ENCODE measurements at regions of chr21 and their contacts with region 1.

Region 1: DNA sequence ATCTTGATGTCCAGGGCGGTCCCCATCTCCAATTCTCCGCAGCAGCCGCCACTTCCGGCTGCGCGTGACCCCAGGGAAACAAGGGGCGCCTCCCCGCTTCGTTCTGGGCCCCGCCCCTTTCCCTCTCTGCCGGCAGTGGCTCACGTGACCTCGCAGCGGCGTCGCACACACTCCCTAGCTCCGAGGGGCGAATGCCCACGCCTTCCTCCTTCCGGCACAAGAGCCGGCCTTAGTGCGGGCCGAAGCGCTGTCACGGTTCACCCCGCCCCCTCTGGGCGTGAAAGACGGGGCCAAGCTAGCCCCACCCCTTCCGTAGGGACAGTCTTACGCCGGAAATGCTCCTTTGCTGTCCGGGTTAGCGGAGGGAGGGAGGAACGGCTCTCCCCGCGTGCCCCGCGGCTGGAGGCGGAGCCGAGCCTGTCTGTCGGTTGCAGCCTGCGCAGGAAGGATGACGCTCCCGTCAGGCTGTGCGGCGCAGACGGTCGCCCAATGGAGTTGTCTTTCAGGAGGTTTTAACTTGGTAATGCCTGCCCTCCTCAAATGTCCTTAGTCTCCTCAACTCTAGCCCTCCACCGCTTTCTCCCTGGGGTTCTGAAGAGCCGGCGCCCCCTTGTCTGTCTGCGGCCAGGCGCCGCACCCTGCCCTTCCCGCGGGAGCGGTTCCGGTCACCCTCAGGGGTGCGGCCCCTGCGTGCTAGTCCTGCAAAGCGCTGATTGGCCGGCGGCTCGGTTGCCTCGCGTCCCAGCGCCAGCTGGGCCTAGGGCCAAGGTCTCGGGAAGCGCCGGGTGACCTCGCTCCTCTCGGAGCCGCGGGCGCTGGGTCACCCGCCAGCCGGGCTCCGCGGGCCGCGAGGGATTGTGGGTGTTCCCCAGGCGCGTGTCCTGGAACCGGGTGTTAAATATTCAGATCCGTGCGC is at the start of gene VPS26C:
- DNase-seq: peak; percentile 98 to 99 (median 99)
- ATAC-seq: peak; percentile 95 to 98 (median 97)
- H3K4me3 ChIP-seq: peak within 1 kb of the TSS; percentile 69 to 95 (median 90)
- H3K27ac ChIP-seq: peak within 1 kb of the TSS; percentile 91 to 100 (median 96)
- H3K4me1 ChIP-seq: peaks cover 0 to 48% (median 27%) of the 10 kb centered on the region in 12 donors
- H3K27me3 ChIP-seq: no peaks in the 10 kb centered on the region
- CTCF ChIP-seq: peak in 2 of 12 donors; percentile 7 to 11
- POLR2A ChIP-seq: peak; percentile 16 to 68
- total RNA-seq, gene VPS26C: 42.1 to 88.6 (median 53.5) TPM

Region 2: GRCh38 chr21:37072988-37073416 is 194.5 kb before region 1 on chr21 and contains the starts of genes PIGP and TTC3:
- intact Hi-C with region 1: loop called in 1 of 10 experiments (anchors 2 kb)
- DNase-seq: peak; percentile 95 to 99 (median 96)
- ATAC-seq: peak; percentile 84 to 92 (median 88)
- H3K4me3 ChIP-seq: peak within 1 kb of the TSS; percentile 67 to 96 (median 80)
- H3K27ac ChIP-seq: peak within 1 kb of the TSS; percentile 92 to 100 (median 99)
- H3K4me1 ChIP-seq: peaks cover 0 to 31% (median 18%) of the 10 kb centered on the region in 12 donors
- H3K27me3 ChIP-seq: no peaks in the 10 kb centered on the region
- CTCF ChIP-seq: no peak
- POLR2A ChIP-seq: peak; percentile 42 to 94
- total RNA-seq, gene PIGP: 30.7 to 44.9 (median 37.9) TPM
- total RNA-seq, gene TTC3: 34.5 to 72.1 (median 46.8) TPM

Region 3: GRCh38 chr21:37208056-37208721 is 59.3 kb before region 1 on chr21:
- intact Hi-C with region 1: no loop called
- DNase-seq: peak; percentile 78 to 91 (median 87)
- ATAC-seq: peak; percentile 91 to 95 (median 94)
- H3K4me3 ChIP-seq: peak overlapping the region in 8 of 12 donors; percentile 1 to 37 (median 22)
- H3K27ac ChIP-seq: peak overlapping the region; percentile 68 to 96 (median 88)
- H3K4me1 ChIP-seq: peaks cover 0 to 35% (median 22%) of the 10 kb centered on the region in 12 donors
- H3K27me3 ChIP-seq: no peaks in the 10 kb centered on the region
- CTCF ChIP-seq: no peak
- POLR2A ChIP-seq: no peak

Region 4: GRCh38 chr21:37220981-37221664 is 46.4 kb before region 1 on chr21:
- intact Hi-C with region 1: loop called in 5 of 10 experiments (anchors 1 to 5 kb)
- DNase-seq: peak; percentile 95 to 97 (median 97)
- ATAC-seq: peak; percentile 96 to 98 (median 96)
- H3K4me3 ChIP-seq: peak overlapping the region; percentile 38 to 84 (median 70)
- H3K27ac ChIP-seq: peak overlapping the region; percentile 71 to 94 (median 86)
- H3K4me1 ChIP-seq: peaks cover 0 to 18% (median 10%) of the 10 kb centered on the region in 12 donors
- H3K27me3 ChIP-seq: no peaks in the 10 kb centered on the region
- CTCF ChIP-seq: peak; percentile 2 to 76 (median 50)
- POLR2A ChIP-seq: peak in 1 of 2 donors; percentile 65

Region 5: GRCh38 chr21:37338671-37339551 is 71.4 kb after region 1 on chr21:
- intact Hi-C with region 1: loop called in 3 of 10 experiments (anchors 1 to 2 kb)
- DNase-seq: peak; percentile 62 to 86 (median 67)
- ATAC-seq: peak; percentile 97 to 98 (median 97)
- H3K4me3 ChIP-seq: peak overlapping the region in 2 of 12 donors; percentile 9 to 23
- H3K27ac ChIP-seq: peak overlapping the region; percentile 76 to 87 (median 82)
- H3K4me1 ChIP-seq: peaks cover 0 to 24% (median 15%) of the 10 kb centered on the region in 12 donors
- H3K27me3 ChIP-seq: no peaks in the 10 kb centered on the region
- CTCF ChIP-seq: no peak
- POLR2A ChIP-seq: no peak

Region 6: GRCh38 chr21:37452227-37452626 is 184.7 kb after region 1 on chr21:
- intact Hi-C with region 1: loop called in 4 of 10 experiments (anchors 10 kb)
- DNase-seq: peak in 4 of 5 donors; percentile 54 to 72 (median 58)
- ATAC-seq: peak; percentile 85 to 93 (median 90)
- H3K4me3 ChIP-seq: no peak overlapping the region
- H3K27ac ChIP-seq: peak overlapping the region; percentile 18 to 67 (median 50)
- H3K4me1 ChIP-seq: peaks cover 6 to 97% (median 76%) of the 10 kb centered on the region in 12 donors
- H3K27me3 ChIP-seq: no peaks in the 10 kb centered on the region
- CTCF ChIP-seq: no peak
- POLR2A ChIP-seq: no peak

Region 7: GRCh38 chr21:37463083-37463801 is 195.7 kb after region 1 on chr21:
- intact Hi-C with region 1: loop called in 6 of 10 experiments (anchors 10 kb)
- DNase-seq: no peak
- ATAC-seq: peak; percentile 55 to 74 (median 67)
- H3K4me3 ChIP-seq: peak overlapping the region in 5 of 12 donors; percentile 7 to 28 (median 26)
- H3K27ac ChIP-seq: peak overlapping the region in 3 of 12 donors; percentile 11 to 54 (median 25)
- H3K4me1 ChIP-seq: peaks cover 10 to 85% (median 61%) of the 10 kb centered on the region in 12 donors
- H3K27me3 ChIP-seq: no peaks in the 10 kb centered on the region
- CTCF ChIP-seq: peak; percentile 22 to 72 (median 54)
- POLR2A ChIP-seq: no peak